HepG2 (cell line): ENCODE measurements at regions of chr7 and their contacts with region 1.

Region 1: GRCh38 chr7:98922393-98923187 is 44.3 kb downstream of the TRRAP start:
- DNase-seq: peak; percentile 83
- ATAC-seq: peak; percentile 93
- H3K4me3 ChIP-seq: no peak overlapping the region
- H3K27ac ChIP-seq: no peak overlapping the region
- H3K4me1 ChIP-seq: peaks cover 18% of the 10 kb centered on the region
- H3K27me3 ChIP-seq: no peaks in the 10 kb centered on the region
- CTCF ChIP-seq: peak; percentile 32; the same call in 1 of the 2 replicates
- EP300 ChIP-seq: peak in 1 of 2 experiments; percentile 31; a peak in 1 of 4 replicates
- POLR2A ChIP-seq: no peak
- RAD21 ChIP-seq: no peak

Region 2: GRCh38 chr7:98878365-98879165 is 44.0 kb before region 1 on chr7 and contains the start of gene TRRAP:
- CTCF ChIA-PET with region 1: no interaction called
- POLR2A ChIA-PET with region 1: no interaction called
- in situ Hi-C with region 1: no loop called
- intact Hi-C with region 1: loop called (anchors 2 kb)
- DNase-seq: peak; percentile 35
- ATAC-seq: peak; percentile 87
- H3K4me3 ChIP-seq: peak within 1 kb of the TSS; percentile 89 to 100 (median 97)
- H3K27ac ChIP-seq: peak within 1 kb of the TSS; percentile 87
- H3K4me1 ChIP-seq: peaks cover 45% of the 10 kb centered on the region
- H3K27me3 ChIP-seq: peaks cover 1 to 9% of the 10 kb centered on the region in 2 experiments; a peak in 2 of 5 replicates
- CTCF ChIP-seq: peak; percentile 81
- EP300 ChIP-seq: no peak
- POLR2A ChIP-seq: peak; percentile 58 to 69
- RAD21 ChIP-seq: 0 out of 2 replicates have a peak, but pooled peaks have one; percentile 38
- total RNA-seq, gene TRRAP: 10.5 and 21.3 TPM in 2 replicates

Region 3: DNA sequence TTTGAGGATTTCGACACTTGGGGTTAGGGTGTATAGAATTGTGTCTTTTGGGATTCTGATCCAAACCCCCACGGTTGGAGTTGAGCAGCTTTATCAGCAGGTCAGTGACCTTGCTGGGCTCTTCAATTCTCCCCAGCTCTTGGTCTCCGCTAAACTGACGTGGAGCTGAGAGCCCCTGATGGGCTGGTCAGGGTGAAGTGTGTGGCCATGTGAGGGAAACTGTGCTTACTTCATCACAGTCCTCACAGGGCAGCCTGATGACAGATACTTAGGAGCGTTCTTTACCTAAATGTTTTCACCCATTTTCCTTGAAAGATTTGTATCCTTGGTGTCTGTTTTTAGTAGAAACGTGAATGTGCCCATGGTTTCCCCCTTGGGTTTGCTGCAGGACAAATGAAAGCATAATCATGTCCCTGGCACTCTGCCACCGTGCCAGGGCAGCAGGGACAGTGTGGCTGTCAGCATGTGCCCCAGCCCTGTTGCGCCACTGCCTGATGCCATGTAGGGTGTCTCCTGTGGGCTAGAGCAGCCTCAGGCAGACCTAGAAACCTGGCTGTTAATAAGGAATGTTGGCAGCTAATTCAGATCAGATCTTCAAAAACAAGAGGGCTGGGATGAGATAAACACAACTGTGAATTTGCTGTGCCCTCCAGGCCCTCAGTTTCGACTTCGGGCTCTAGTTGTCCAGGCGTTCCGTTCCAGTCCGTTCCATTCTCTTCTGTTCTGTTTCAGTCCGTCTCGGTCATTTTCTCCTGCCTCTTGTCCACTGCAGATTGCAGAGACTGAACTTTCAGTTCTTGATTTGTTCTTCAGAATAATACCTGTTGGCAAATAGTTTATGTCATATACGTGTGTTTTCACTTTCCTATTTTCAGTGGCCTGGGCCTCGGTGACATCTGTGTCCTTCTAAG is 52.6 kb after region 1 on chr7:
- CTCF ChIA-PET with region 1: no interaction called
- POLR2A ChIA-PET with region 1: no interaction called
- in situ Hi-C with region 1: no loop called
- intact Hi-C with region 1: no loop called
- DNase-seq: no peak
- ATAC-seq: no peak
- H3K4me3 ChIP-seq: no peak overlapping the region
- H3K27ac ChIP-seq: no peak overlapping the region
- H3K4me1 ChIP-seq: no peaks in the 10 kb centered on the region
- H3K27me3 ChIP-seq: no peaks in the 10 kb centered on the region
- CTCF ChIP-seq: no peak
- EP300 ChIP-seq: no peak
- POLR2A ChIP-seq: no peak
- RAD21 ChIP-seq: no peak